ENCODE measurements at regions of chr10 and their contacts with region 1.

Region 1: GRCh38 chr10:48910548-48910947 is 29.1 kb downstream of the LRRC18 start:
- DNase-seq: no peak
- CTCF ChIP-seq: no peak

Region 2: GRCh38 chr10:48923748-48924147 is 13.2 kb after region 1 on chr10:
- CTCF ChIA-PET with region 1: interaction called, 10 read pairs
- POLR2A ChIA-PET with region 1: no interaction called
- DNase-seq: no peak
- CTCF ChIP-seq: no peak

Measured in GM10248 (cell line).